Gastrocnemius medialis (tissue), 4 donors: ENCODE measurements at regions of chr6 and their contacts with region 1.

Region 1: GRCh38 chr6:2971420-2972218 is at the start of gene SERPINB6:
- DNase-seq: peak; percentile 74 to 82
- ATAC-seq: peak; percentile 76 to 77
- H3K4me3 ChIP-seq: peak within 1 kb of the TSS; percentile 79 to 85 (median 82)
- H3K27ac ChIP-seq: peak within 1 kb of the TSS; percentile 94 to 100 (median 99)
- H3K4me1 ChIP-seq: peaks cover 14 to 24% of the 10 kb centered on the region in 2 donors
- H3K27me3 ChIP-seq: no peaks in the 10 kb centered on the region
- CTCF ChIP-seq: no peak
- POLR2A ChIP-seq: no peak
- total RNA-seq, gene SERPINB6: 114 to 260 (median 189) TPM

Region 2: DNA sequence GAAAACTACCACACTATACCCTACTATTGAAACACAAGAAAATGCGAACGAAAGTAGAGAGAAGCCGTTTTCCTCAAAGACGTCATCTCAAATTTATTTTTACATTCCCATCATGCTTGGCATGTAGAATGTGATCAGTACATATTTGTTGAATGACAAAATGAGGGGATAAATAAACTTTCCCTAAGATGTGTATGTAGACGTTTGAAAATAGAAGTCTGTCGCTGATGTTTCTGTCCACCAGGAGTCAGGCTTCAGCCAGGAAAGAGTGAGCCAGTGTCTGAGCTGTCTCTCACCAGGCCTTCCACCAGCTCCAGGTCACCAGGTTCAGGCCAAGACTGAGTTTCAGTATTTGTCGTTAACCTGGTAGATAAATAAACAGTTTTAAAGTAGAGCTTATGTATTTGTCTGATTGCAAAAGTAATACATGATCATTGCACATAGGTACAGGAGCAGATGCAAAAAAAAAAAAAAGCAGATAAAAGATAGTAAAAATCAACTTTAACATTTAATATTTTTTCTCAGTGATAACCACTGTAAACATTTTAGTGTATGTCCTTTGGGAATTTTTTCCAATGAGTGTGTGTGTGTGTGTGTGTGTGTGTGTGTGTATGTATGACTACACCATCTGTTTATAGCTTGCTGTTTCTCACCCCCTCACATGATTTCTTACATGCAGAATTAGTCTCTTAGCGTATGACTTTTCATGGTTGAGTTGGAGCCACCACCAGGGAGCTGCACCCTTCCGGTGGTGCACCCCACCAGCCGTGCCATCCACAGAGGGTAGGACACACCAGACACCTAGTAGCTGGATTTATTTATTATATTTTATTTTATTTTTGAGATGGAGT is 180.3 kb before region 1 on chr6:
- in situ Hi-C with region 1: no loop called
- intact Hi-C with region 1: no loop called
- DNase-seq: peak; percentile 61 to 78
- ATAC-seq: peak; percentile 84 to 85
- H3K4me3 ChIP-seq: peak overlapping the region in 3 of 4 donors; percentile 24 to 29 (median 27)
- H3K27ac ChIP-seq: peak overlapping the region; percentile 78 to 80 (median 79)
- H3K4me1 ChIP-seq: peaks cover 23 to 31% of the 10 kb centered on the region in 2 donors
- H3K27me3 ChIP-seq: no peaks in the 10 kb centered on the region
- CTCF ChIP-seq: peak; percentile 74 to 84 (median 78)
- POLR2A ChIP-seq: no peak

Region 3: DNA sequence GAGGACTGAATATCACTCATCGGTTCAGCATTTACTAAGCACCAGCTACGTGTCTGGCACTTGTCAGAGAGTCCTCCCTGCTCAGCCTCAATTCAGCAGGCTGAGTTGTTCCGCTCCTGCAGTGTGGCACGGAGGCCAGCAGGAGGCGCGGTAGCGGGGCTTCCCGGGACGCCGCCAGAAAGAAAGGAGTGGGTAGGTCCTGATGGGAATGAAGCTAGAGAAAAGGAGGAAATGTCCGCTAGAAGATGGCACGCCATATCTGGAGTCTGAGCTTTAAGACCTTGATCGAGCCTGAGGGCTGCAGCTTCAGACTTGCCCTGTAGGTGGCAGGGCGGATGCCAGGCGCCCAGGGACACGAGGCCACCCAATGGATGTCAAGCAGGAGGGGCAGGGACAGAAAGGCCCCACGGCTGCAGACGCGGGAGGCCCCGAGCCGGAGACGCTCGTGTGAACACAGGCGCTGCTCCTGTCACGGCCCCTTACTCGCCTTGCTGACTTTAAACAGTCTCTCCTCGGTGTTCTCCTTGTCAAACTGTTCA is 19.0 kb before region 1 on chr6:
- in situ Hi-C with region 1: no loop called
- intact Hi-C with region 1: loop called (anchors 2 kb)
- DNase-seq: peak; percentile 49 to 76
- ATAC-seq: peak; percentile 59 to 76
- H3K4me3 ChIP-seq: no peak overlapping the region
- H3K27ac ChIP-seq: peak overlapping the region; percentile 45 to 74 (median 65)
- H3K4me1 ChIP-seq: peaks cover 11 to 32% of the 10 kb centered on the region in 2 donors
- H3K27me3 ChIP-seq: no peaks in the 10 kb centered on the region
- CTCF ChIP-seq: peak; percentile 93 to 97 (median 94)
- POLR2A ChIP-seq: no peak

Region 4: DNA sequence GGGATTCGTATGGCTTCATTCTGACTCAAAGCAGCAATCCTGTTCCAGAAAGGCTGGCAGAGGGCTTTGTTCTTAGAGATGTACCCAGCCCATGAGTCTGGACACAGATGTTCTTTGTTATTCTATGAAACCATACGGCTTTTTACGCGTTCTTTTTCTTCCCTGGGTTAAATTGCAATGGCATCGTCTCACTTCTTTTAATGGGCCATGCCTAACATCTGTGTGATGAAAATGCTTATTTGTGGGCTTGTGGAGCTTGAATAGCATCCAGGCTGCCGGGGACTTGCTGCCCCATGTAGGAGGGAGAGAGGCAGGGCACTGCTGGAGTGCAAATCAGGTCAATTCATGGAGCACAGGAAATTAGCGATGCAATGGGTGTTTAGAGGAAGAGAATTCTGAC is 896.9 kb after region 1 on chr6:
- in situ Hi-C with region 1: no loop called
- intact Hi-C with region 1: no loop called
- DNase-seq: no peak
- ATAC-seq: peak in 1 of 2 donors; percentile 47
- H3K4me3 ChIP-seq: no peak overlapping the region
- H3K27ac ChIP-seq: no peak overlapping the region
- H3K4me1 ChIP-seq: no peaks in the 10 kb centered on the region
- H3K27me3 ChIP-seq: no peaks in the 10 kb centered on the region
- CTCF ChIP-seq: no peak
- POLR2A ChIP-seq: no peak